Pancreas (tissue), 10 donors: ENCODE measurements at regions of chr4 and their contacts with region 1.

Region 1: DNA sequence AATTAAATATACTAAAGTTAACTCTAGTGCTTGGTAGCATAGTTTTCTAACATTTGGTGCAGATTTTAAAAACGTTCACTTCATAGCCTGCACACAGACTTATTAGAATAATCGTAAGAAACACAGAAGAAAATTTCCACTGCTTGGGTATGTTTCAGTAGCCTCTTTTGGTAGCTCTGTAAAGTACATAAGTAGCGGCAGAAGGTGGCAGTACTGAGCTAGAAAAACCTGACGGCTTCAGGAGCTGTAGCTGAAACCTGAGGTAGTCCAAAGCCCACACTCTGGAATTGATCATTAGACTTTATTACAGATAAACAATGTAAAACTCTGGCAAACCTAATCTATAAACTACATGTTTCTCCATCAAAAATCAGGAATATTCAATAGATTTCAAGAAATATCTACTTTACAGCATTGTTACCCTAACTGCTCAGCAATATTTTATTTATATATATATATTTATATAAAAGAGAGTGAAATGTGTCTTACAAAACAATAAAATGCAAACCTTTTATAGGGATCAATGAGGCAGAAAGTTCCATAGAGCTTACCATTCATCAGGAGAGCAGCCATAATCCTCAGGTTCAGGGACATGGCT is 88.2 kb downstream of the ATP8A1 start:
- DNase-seq: peak in 3 of 6 donors; percentile 49 to 71 (median 54)
- ATAC-seq: peak; percentile 86 to 94 (median 92)
- H3K4me3 ChIP-seq: no peak overlapping the region
- H3K27ac ChIP-seq: no peak overlapping the region
- H3K4me1 ChIP-seq: peaks cover 0 to 9% (median 0%) of the 10 kb centered on the region in 3 donors
- H3K27me3 ChIP-seq: no peaks in the 10 kb centered on the region
- CTCF ChIP-seq: peak; percentile 20 to 62 (median 54)

Region 2: DNA sequence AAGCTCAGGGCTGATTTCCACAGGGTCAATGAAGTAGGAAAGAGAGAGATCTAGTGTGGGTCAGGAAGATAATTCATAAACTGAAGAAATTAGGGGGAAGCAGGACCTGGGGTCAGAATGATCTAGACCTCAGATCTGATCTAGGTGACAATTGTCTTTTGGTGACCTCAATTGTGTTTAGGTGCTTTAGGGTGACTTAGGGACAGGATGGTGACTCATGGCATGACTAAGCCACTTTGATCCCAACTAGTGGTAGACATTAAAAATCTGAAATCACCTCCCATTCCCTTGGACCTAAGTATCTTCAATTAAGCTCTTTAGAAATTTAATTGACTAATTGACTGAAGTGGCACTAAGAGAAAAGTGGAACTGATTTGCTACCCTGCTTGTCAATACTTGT is 287.1 kb after region 1 on chr4:
- intact Hi-C with region 1: loop called in 2 of 3 experiments (anchors 10 kb)
- DNase-seq: no peak
- ATAC-seq: no peak
- H3K4me3 ChIP-seq: no peak overlapping the region
- H3K27ac ChIP-seq: no peak overlapping the region
- H3K4me1 ChIP-seq: no peaks in the 10 kb centered on the region
- H3K27me3 ChIP-seq: peaks cover 0 to 3% (median 0%) of the 10 kb centered on the region in 4 donors
- CTCF ChIP-seq: no peak

Region 3: DNA sequence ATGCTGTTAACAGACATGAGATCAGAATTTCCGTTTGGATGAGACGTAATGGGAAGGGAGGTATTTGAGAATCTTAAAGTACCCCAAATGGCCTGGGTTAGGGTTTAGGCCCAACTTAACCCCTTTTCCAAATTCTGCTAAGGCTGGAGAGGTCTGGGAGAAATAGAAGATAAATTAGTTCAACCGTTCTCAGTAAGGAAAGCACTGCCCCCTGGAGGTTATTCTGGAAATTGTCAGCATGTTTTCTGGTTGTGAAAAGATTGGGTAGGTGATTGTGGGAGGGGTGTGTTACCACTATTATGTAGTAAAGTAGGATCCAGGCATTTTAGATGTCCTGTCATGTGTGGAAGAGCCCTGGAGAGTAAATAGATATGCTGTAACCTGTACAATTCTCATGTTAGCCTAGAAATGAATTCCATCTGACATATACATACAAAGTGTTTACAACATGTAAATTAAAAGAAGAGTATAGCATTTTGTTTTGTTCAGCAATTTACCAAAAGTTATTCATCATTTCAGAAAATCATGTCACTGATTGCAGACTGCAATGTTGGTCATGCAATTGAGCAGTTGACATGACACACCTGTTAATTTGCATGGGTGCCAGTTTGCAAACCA is 297.0 kb after region 1 on chr4:
- intact Hi-C with region 1: loop called in 2 of 3 experiments (anchors 5 to 10 kb)
- DNase-seq: peak in 3 of 6 donors; percentile 17 to 53 (median 20)
- ATAC-seq: peak; percentile 53 to 82 (median 75)
- H3K4me3 ChIP-seq: no peak overlapping the region
- H3K27ac ChIP-seq: no peak overlapping the region
- H3K4me1 ChIP-seq: no peaks in the 10 kb centered on the region
- H3K27me3 ChIP-seq: peaks cover 0 to 8% (median 0%) of the 10 kb centered on the region in 4 donors
- CTCF ChIP-seq: peak; percentile 61 to 69 (median 67)